Dorsolateral prefrontal cortex (tissue), 120 donors: ENCODE measurements at regions of chr1 and their contacts with region 1.

Region 1: DNA sequence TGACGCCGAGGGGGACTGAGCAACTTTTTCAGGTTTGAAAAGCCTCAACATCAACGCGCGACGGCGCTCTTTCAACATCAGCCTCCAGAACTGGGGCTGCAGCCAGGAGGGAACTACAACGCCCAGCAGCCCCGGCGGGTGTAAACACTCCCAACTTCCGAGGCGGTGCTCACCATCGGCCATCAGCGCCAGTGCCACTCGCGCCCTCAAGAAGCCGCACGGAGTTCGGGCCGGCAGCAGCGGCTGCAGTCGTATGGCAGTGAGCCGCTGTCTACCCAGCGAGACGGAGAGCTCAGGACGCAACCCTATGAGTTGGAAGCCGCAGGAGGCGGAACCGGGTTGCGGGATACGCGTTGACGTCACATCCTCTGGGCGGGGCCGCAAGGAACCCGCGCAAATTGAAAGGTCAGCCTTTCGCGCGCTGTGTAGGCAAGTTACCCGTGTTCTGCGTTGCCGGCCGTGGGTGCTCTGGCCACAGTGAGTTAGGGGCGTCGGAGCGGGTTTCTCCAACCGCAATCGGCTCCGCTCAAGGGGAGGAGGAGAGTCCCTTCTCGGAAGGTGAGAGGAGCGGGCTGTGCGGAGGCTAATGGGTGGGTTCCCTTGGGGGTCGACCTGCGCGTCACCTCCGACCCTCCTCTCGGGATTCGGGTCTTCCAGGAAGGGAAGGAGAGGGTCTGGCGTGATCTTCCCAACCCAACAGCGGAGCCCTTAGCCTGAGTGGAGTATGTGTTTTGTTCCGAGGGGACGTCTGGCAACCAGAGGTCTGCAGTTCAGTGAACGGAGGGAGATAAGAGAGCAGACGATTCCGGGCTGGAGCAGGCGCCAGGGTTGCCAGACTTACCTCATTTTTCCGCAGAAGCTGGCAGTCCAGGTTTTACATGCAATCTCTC is at the start of gene EXO1:
- DNase-seq: peak; percentile 86 to 92 (median 90)
- H3K4me3 ChIP-seq: peak within 1 kb of the TSS; percentile 57 to 100 (median 87)
- H3K27ac ChIP-seq: peak within 1 kb of the TSS; percentile 90 to 100 (median 100)
- H3K27me3 ChIP-seq: no peaks in the 10 kb centered on the region
- CTCF ChIP-seq: peak; percentile 27 to 84 (median 64)
- total RNA-seq, gene EXO1: 0.18 to 4.7 (median 1.2) TPM in 118 of 120 experiments, not detected in the others

Region 2: DNA sequence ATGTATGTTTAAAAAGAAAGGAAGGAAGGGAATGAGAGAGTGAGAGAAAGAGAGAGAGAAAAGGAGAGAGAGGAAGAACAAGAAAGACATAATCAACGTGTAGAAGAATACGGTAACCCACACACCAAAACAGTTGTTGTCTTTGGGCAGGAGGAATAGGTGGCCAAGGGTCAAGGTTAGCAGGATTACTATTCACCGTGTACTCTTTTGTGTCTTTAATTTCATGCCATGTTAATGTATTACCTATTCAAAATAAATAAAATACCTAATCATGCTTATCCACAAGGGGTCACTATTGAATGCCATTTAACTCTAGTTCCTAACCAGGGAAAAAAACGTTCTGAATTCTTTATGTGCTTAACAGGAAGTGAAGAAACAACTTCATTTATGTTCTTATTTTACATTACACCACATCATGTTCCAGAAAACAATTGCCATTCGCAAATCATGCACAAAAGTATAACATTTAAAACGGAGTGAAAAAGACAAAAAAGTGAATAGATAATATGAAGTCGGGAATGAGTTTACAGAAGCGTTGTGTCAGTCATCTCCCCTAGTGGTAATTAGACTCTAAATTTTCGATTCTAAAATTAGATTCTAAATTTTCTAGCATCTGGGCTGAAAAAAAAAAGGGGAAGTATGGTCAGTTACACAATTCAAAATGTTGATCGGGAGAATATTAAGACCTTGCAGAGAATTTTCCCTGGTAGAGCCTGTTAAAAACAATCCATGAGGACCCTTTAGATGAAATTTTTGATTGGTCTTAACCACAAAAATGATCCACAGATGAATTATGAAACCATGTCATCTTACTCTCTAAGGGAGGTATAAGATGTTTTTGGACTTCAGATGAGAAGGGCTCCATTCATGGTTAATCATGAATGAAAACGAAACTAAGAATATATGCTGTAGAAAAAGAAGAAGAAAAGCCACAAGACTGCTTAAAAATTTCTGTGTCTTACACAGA is 316.6 kb before region 1 on chr1:
- intact Hi-C with region 1: loop called (anchors 5 kb)
- DNase-seq: no peak
- H3K4me3 ChIP-seq: peak overlapping the region; percentile 32 to 74 (median 58)
- H3K27ac ChIP-seq: peak overlapping the region in 33 of 59 donors; percentile 5 to 73 (median 25)
- H3K27me3 ChIP-seq: no peaks in the 10 kb centered on the region
- CTCF ChIP-seq: peak; percentile 53 to 85 (median 70)

Region 3: DNA sequence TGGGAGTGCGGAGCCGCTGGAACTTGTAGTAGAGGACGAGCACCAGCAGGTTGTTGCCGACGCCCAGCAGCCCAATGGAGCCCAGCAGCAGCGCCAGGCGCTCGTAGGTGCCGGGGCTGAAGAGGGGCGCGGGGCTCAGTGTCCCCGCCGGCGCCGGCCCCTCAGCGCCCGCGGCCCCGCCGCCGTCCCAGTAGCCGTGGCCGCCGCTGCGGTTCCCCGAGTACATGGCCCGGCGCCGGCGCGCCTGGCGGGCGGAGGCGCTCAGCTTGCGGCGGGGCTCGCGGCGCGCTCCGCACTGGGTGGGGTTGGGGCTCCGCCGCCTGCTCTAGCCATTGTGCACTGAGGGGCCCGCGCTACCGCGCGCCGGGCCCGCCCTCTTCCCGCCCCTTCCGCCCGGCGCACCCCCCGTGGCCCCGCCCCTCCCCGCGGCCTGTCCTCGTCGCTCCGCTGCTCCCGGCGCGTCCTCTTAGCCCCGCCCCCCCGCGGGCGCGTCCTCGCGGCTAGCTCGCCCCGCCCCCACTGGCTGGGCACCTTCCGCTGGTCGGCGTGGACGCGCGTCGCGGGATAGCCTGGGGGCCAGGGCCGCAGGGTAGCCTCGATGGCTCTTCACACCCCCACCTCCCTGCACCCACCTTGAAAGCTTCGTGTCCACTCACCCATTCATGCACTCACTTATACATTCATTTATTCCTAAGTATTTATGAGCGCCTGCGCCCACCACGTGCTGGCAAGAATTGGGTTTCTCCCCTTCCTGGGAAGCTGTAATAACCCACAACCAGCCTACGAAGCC is 207.8 kb before region 1 on chr1 and contains the starts of genes CHML and OPN3:
- intact Hi-C with region 1: loop called (anchors 5 kb)
- DNase-seq: peak; percentile 83 to 97 (median 91)
- H3K4me3 ChIP-seq: peak within 1 kb of the TSS; percentile 64 to 98 (median 89)
- H3K27ac ChIP-seq: peak within 1 kb of the TSS; percentile 25 to 93 (median 85)
- H3K27me3 ChIP-seq: no peaks in the 10 kb centered on the region
- CTCF ChIP-seq: peak in 16 of 56 donors; percentile 7 to 51 (median 19)
- total RNA-seq, gene CHML: 8.5 to 41.5 (median 19.6) TPM
- total RNA-seq, gene OPN3: 10.6 to 48.1 (median 29.5) TPM

Region 4: DNA sequence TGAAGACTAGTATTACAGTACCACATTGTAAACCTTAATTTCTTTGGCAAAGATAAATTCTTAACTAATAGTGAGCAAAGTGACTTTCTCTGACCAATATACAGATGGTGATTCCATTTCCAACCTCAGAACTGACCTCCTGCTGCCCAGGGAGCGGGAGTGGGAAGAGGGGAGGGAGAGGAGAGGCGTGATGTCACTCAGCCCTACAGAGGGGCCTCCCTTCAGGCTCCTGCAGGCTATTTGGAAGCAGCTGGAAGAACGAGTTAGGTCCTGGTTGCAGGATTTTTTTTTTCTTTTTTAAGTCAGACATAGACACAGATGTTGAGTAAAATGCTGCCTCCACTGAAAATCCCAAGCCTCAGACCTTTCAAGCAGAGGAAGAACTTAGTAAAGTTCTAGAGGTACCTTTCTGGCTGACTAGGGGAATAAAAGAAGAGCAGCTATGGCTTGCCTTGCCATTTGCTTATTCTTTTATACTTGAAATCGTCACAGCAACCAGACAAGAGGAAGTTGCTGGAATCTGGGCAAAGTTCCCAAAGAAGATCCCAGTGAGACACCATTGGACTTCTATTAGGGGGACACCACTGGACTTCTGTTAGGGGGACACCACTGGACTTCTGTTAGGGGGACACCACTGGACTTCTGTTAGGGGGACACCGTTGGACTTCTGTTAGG is 54.5 kb after region 1 on chr1:
- intact Hi-C with region 1: no loop called
- DNase-seq: no peak
- H3K4me3 ChIP-seq: no peak overlapping the region
- H3K27ac ChIP-seq: no peak overlapping the region
- H3K27me3 ChIP-seq: no peaks in the 10 kb centered on the region
- CTCF ChIP-seq: no peak

Region 5: DNA sequence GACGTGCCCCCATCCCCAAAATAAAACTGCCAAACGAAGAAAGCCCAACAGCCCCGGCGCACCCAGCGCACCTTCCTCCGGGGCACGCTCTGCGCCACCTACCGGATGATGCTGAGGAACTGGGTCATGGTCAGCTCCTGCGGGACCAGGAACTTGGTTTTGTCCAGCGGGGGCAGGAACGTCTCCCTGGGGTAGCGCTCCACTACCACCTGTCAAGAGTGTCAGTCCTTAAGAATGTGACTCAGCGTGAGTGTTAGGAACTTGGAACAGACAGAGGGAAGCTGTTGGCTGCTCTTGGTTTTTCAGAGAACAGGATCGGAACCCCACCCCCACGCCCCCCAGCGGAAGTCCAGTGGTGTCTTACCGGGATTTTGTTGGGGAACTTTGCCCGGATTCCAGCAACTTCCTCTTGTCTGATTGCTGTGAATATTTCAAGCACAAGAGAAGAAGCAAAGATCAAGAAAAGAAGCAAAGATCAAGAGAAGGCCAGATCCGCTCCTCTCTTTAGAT is 150.4 kb after region 1 on chr1:
- intact Hi-C with region 1: loop called (anchors 5 kb)
- DNase-seq: peak in 8 of 10 donors; percentile 12 to 60 (median 40)
- H3K4me3 ChIP-seq: peak overlapping the region in 47 of 59 donors; percentile 1 to 58 (median 33)
- H3K27ac ChIP-seq: no peak overlapping the region
- H3K27me3 ChIP-seq: no peaks in the 10 kb centered on the region
- CTCF ChIP-seq: peak; percentile 17 to 84 (median 66)

Region 6: DNA sequence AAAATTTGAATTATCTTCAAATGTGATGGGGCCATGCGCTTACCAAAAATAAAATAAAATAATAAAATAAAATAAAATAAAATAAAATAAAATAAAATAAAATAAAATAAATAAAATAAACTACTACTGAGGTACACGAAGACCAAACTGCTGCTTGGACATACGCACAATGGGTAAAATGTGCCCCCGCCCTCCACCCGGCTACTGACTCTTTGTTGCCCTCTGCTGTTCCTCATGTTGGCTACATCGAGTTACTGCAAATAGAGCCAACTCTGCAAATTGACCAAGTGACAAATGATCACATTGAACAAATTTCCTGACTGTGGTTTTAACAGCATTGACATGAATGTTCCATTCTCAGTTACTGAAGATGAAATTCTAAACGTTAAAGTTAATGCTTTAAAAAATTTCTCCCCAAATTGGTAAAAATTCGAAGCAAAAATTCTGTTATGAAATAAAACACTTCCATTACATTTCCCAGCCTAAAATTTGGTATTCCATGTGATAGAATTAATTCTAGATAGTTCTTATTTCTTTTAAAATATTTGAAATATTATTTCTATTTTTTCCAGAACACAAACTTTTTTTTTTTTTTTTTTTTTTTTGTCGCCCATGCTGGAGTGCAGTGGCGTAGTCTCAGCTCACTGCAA is 169.7 kb after region 1 on chr1:
- intact Hi-C with region 1: loop called in 1 of 2 experiments (anchors 5 kb)
- DNase-seq: peak; percentile 46 to 79 (median 66)
- H3K4me3 ChIP-seq: no peak overlapping the region
- H3K27ac ChIP-seq: no peak overlapping the region
- H3K27me3 ChIP-seq: no peaks in the 10 kb centered on the region
- CTCF ChIP-seq: peak in 55 of 56 donors; percentile 48 to 84 (median 71)